HepG2 (cell line): ENCODE measurements at regions of chr6 and their contacts with region 1.

Region 1: GRCh38 chr6:138572167-138572865 is 73.0 kb upstream of the NHSL1 start:
- DNase-seq: peak; percentile 97
- ATAC-seq: peak; percentile 94
- H3K4me3 ChIP-seq: peak overlapping the region; percentile 60 to 84 (median 64)
- H3K27ac ChIP-seq: peak overlapping the region; percentile 79
- H3K4me1 ChIP-seq: peaks cover 43% of the 10 kb centered on the region
- H3K27me3 ChIP-seq: no peaks in the 10 kb centered on the region; a peak in 2 of 5 replicates
- CTCF ChIP-seq: no peak
- EP300 ChIP-seq: 0 out of 4 replicates have a peak, but pooled peaks of 1 of the 2 experiments have one; percentile 37
- POLR2A ChIP-seq: peak; percentile 93 to 98
- RAD21 ChIP-seq: no peak

Region 2: GRCh38 chr6:138509371-138509770 is 62.9 kb before region 1 on chr6:
- CTCF ChIA-PET with region 1: no interaction called
- POLR2A ChIA-PET with region 1: interaction called, 9 read pairs
- in situ Hi-C with region 1: no loop called
- intact Hi-C with region 1: loop called (anchors 5 kb)
- DNase-seq: peak; percentile 71
- ATAC-seq: peak; percentile 31; the same call in 2 of the 3 replicates
- H3K4me3 ChIP-seq: no peak overlapping the region
- H3K27ac ChIP-seq: no peak overlapping the region
- H3K4me1 ChIP-seq: peaks cover 54% of the 10 kb centered on the region
- H3K27me3 ChIP-seq: no peaks in the 10 kb centered on the region
- CTCF ChIP-seq: peak; percentile 90
- EP300 ChIP-seq: no peak
- POLR2A ChIP-seq: no peak
- RAD21 ChIP-seq: peak; percentile 63; the same call in 1 of the 2 replicates

Region 3: GRCh38 chr6:138526822-138527235 is 45.5 kb before region 1 on chr6:
- CTCF ChIA-PET with region 1: no interaction called
- POLR2A ChIA-PET with region 1: interaction called, 19 read pairs
- in situ Hi-C with region 1: no loop called
- intact Hi-C with region 1: loop called (anchors 1 kb)
- DNase-seq: peak; percentile 93
- ATAC-seq: peak; percentile 95
- H3K4me3 ChIP-seq: peak overlapping the region; percentile 9 to 32 (median 30); a peak in 3 of 6 replicates
- H3K27ac ChIP-seq: peak overlapping the region; percentile 67
- H3K4me1 ChIP-seq: peaks cover 63% of the 10 kb centered on the region
- H3K27me3 ChIP-seq: no peaks in the 10 kb centered on the region
- CTCF ChIP-seq: 0 out of 2 replicates have a peak, but pooled peaks have one; percentile 9
- EP300 ChIP-seq: peak in 1 of 2 experiments; percentile 69; a peak in 2 of 4 replicates
- POLR2A ChIP-seq: no peak
- RAD21 ChIP-seq: no peak

Region 4: GRCh38 chr6:138538390-138539031 is 33.8 kb before region 1 on chr6:
- CTCF ChIA-PET with region 1: no interaction called
- POLR2A ChIA-PET with region 1: interaction called, 121 read pairs
- in situ Hi-C with region 1: no loop called
- intact Hi-C with region 1: no loop called
- DNase-seq: peak; percentile 86
- ATAC-seq: peak; percentile 76
- H3K4me3 ChIP-seq: peak overlapping the region in 2 of 3 experiments; percentile 3 to 6; a peak in 1 of 6 replicates
- H3K27ac ChIP-seq: peak overlapping the region; percentile 90
- H3K4me1 ChIP-seq: peaks cover 98% of the 10 kb centered on the region
- H3K27me3 ChIP-seq: no peaks in the 10 kb centered on the region
- CTCF ChIP-seq: peak; percentile 38
- EP300 ChIP-seq: peak in 1 of 2 experiments; percentile 91; a peak in 1 of 4 replicates
- POLR2A ChIP-seq: no peak
- RAD21 ChIP-seq: peak; percentile 19; the same call in 1 of the 2 replicates

Region 5: DNA sequence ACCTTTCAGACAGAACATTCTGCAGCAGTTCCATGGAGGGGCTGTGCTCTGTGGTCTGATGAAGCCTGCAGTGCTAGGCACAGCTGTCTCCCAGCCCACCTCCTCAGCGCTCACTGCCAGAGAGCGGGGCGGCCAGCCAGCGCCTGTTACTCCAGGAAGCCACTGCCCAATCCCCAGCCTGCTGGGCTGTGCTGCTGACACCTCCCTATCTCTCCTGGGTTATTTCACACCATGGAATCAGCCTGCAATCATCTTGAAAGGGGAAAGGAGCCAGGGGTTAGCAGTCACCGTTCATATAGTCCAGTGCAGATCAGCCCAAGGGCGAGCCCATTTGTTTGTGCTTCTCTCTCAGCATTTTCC is 26.7 kb before region 1 on chr6:
- CTCF ChIA-PET with region 1: no interaction called
- POLR2A ChIA-PET with region 1: interaction called, 121 read pairs
- in situ Hi-C with region 1: no loop called
- intact Hi-C with region 1: loop called (anchors 1 kb)
- DNase-seq: no peak
- ATAC-seq: peak; percentile 38
- H3K4me3 ChIP-seq: peak overlapping the region; percentile 3 to 45 (median 37); a peak in 3 of 6 replicates
- H3K27ac ChIP-seq: peak overlapping the region; percentile 90
- H3K4me1 ChIP-seq: peaks cover 100% of the 10 kb centered on the region
- H3K27me3 ChIP-seq: no peaks in the 10 kb centered on the region
- CTCF ChIP-seq: no peak
- EP300 ChIP-seq: no peak
- POLR2A ChIP-seq: no peak
- RAD21 ChIP-seq: no peak

Region 6: GRCh38 chr6:138555421-138555988 is 16.8 kb before region 1 on chr6:
- CTCF ChIA-PET with region 1: no interaction called
- POLR2A ChIA-PET with region 1: interaction called, 75 read pairs
- in situ Hi-C with region 1: no loop called
- intact Hi-C with region 1: loop called (anchors 2 kb)
- DNase-seq: peak; percentile 79
- ATAC-seq: peak; percentile 70
- H3K4me3 ChIP-seq: peak overlapping the region in 2 of 3 experiments; percentile 6 to 25; a peak in 2 of 6 replicates
- H3K27ac ChIP-seq: peak overlapping the region; percentile 45
- H3K4me1 ChIP-seq: peaks cover 94% of the 10 kb centered on the region
- H3K27me3 ChIP-seq: no peaks in the 10 kb centered on the region
- CTCF ChIP-seq: no peak
- EP300 ChIP-seq: peak in 1 of 2 experiments; percentile 27; a peak in 1 of 4 replicates
- POLR2A ChIP-seq: no peak
- RAD21 ChIP-seq: no peak